Right ventricle myocardium inferior (tissue), 1 donor: ENCODE measurements at regions of chr2 and their contacts with region 1.

Region 1: GRCh38 chr2:158968396-158969161 is at the start of gene TANC1:
- DNase-seq: peak; percentile 94
- ATAC-seq: peak; percentile 98
- total RNA-seq, gene TANC1: 62.4 TPM

Region 2: GRCh38 chr2:159030674-159031380 is 62.2 kb after region 1 on chr2:
- intact Hi-C with region 1: loop called (anchors 2 kb)
- DNase-seq: peak; percentile 69
- ATAC-seq: peak; percentile 84

Region 3: DNA sequence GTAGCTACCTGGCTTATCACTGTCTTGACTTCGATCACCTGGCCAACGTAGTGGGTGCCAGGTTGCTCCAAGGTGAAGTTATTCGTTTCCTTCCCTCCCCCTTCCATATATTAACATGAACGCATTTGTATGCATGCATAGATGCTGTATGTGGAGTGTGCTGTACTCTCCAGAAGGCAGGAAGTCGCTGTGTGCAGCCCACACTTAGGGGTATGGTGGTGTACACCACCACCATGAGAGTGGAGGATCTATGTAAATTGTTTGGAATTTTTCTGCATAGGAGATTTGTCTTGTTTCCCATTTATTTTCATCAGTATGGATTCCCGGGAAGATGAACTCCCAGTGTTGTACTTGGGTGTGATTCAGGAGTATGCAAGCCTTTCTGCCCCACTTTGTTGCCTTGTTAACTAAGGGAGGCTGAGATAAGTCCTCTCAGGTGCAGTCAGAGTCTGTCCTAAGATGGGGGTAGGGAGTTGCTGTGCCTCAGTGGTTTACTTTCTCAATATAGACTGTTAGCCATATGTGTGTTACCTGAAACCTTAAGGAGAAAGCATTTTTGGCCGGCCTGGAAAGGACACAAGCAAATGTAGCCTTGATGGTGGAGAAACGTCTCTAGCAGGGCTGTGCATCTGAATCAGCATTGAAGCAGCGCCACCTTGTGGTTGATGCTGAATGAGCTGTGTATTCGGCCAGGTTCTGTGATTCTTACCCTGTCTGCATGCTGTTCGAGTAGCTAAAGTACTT is 149.7 kb after region 1 on chr2:
- intact Hi-C with region 1: loop called (anchors 1 kb)
- DNase-seq: peak; percentile 87
- ATAC-seq: peak; percentile 87

Region 4: DNA sequence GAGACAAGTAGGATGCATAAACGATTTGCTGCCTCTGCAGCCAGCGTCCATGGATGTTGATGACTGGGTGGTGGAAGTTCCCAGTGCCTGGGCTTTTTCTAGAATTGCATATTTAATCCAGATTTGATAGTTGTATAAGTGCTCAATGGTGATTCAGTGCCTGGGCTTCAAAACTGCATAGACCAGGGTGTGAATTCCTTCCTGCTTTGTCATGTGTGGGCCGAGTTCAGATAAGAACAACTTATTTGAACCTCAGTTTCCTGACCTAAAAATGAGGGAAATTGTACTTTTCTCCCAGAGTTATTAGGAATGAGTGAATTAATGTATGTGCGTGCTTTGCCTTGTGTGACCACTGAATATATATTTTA is 163.3 kb after region 1 on chr2:
- intact Hi-C with region 1: no loop called
- DNase-seq: no peak
- ATAC-seq: no peak

Region 5: DNA sequence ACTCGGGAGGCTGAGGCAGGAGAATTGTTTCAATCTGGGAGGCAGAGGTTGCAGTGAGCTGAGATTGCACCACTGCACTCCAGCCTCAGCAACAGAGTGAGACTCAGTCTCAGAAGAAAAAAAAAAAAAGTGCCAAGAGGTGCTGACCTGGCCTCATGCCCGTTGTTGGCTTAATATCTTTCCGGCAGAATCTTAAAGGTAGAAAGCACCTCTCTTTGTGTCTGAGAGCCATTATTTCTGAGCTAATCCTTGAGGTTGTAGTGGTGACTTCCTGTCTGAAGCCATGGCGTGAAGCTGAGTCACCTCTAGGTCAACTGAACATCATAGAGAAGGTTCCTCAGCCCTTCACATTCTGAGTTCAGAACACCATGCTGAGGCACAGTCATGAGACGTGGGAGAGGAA is 257.5 kb after region 1 on chr2:
- intact Hi-C with region 1: no loop called
- DNase-seq: no peak
- ATAC-seq: no peak